ENCODE measurements at regions of chr9 and their contacts with region 1.

Region 1: DNA sequence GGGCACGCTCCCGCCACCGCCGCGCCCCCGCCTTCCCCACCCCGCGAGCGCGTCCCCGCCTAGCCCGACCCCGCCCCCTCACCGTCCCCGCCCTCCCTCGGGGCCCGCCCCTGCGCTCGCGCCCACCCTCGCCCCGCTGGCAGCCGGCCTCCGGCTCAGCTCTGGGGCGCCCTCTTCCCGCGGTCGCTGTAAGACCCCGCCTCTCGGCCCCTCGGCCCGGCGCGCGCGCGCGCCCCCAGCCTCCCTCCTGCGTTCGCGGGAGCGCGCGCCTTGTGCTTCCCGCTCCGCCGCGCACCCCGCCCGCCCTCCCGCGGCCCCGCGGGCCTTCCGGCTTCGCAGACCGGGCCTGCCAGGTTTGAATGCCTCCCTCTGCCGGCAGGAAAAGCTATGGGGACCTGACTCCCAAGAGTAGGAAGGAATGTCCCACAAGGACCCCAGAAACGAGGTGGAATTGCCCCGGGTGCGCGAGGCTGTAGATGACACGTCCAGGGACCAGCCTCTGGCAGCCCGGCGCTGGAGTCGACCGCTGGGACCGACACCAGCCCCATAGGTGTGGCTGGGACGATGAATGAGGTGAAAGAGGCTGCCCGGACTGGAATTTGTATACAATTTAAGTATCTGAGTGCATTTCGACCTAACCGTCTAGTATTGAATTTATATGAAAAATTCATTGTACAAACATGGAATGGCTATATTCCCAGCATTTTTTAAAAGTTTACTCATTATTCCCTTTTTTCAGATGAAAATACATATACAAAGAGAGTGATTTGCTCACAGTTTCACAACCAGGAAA is 416 bp upstream of the PTBP3 start:
- DNase-seq: peak; percentile 87
- H3K4me3 Mint-ChIP-seq: peak overlapping the region; percentile 84
- H3K27ac Mint-ChIP-seq: peak overlapping the region; percentile 94
- H3K4me1 Mint-ChIP-seq: peaks cover 33% of the 10 kb centered on the region
- H3K27me3 Mint-ChIP-seq: no peaks in the 10 kb centered on the region

Region 2: GRCh38 chr9:111896353-111896958 is 437.4 kb before region 1 on chr9 and contains the start of gene UGCG:
- intact Hi-C with region 1: loop called (anchors 1 kb)
- DNase-seq: peak; percentile 85
- H3K4me3 Mint-ChIP-seq: peak within 1 kb of the TSS; percentile 84
- H3K27ac Mint-ChIP-seq: peak within 1 kb of the TSS; percentile 83
- H3K4me1 Mint-ChIP-seq: peaks cover 9% of the 10 kb centered on the region
- H3K27me3 Mint-ChIP-seq: peaks cover 3% of the 10 kb centered on the region
- total RNA-seq, gene UGCG: 14.4 and 16.6 TPM in 2 replicates

Region 3: DNA sequence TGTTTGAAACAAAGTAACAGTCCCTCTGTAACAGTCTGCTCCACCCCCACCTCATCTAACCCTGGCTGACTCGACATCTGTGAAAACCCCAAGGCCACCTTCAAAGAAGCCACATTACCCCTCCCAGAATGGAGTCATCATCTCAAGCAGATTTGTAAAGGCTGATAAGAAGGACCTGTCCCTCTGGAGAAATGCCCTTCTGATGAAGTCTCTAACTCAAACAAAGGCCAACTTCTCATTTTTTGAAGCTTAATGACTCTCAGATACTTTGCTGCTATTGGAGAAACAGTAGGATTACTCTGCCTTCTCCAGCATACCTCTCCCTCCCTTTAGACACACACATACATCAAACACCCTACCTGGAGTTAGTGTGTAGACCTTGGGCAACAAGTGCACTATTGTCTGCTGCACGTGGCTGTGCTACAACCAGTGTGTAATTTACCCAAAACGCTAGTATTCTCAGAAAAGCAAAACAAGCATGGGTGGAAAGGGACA is 153.4 kb before region 1 on chr9:
- intact Hi-C with region 1: loop called (anchors 2 kb)
- DNase-seq: peak; percentile 55
- H3K4me3 Mint-ChIP-seq: peak overlapping the region; percentile 11
- H3K27ac Mint-ChIP-seq: peak overlapping the region; percentile 61
- H3K4me1 Mint-ChIP-seq: peaks cover 50% of the 10 kb centered on the region
- H3K27me3 Mint-ChIP-seq: peaks cover 2% of the 10 kb centered on the region

Region 4: DNA sequence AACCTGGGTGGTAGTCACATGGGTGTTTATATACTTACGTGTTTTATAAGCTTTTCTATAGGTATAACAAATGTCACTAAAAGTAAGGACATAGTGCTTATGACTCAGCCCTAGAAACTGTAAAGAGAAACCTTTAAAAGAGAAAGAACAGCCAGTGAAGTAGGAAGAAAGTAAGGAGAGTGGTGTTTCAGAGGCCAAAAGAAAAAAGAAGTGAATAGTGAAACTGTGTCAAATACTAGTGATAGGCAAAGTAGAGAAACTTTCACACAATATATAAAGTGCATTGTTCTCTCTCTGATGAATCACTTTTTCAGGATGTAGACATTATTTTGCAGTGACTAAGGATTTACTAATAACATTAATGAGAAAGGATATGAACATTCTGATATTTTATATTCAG is 84.6 kb before region 1 on chr9:
- intact Hi-C with region 1: loop called (anchors 2 kb)
- DNase-seq: no peak
- H3K4me3 Mint-ChIP-seq: no peak overlapping the region
- H3K27ac Mint-ChIP-seq: peak overlapping the region; percentile 34
- H3K4me1 Mint-ChIP-seq: peaks cover 26% of the 10 kb centered on the region
- H3K27me3 Mint-ChIP-seq: no peaks in the 10 kb centered on the region

Region 5: DNA sequence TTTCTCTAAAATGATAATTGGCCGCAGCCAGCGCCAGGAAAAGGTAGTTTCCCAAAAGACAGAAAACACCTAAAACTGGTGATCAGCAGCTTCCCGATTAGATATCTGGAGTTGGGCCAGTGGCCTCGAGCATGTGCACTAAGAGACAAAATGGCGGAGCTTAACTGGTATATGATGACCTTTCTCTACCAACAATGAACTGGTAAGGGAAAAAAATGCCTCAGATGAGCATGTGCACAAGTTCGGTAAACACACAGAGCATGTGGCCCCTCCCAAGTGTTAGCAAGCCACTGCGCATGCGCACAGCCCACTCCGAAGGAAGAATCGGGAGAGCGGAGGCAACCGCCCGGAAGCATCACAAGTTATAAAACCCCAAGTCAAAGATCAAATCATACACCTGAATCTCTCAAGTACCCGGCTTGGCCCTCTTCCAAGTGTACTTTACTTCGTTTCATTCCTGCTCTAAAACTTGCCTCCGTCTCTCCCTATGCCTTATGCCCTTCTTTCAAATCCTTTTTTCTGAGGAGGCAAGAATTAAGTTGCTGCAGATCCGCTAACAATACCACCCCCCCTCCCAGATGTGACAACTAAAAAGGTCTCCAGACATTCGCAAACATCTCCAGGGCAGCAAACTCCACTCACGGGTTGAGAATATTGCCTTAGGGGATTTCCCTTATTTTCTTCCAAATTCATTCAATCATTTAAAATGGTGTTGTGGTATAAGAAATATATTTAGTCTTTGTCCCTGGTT is 14.6 kb after region 1 on chr9:
- intact Hi-C with region 1: loop called (anchors 2 kb)
- DNase-seq: peak; percentile 70
- H3K4me3 Mint-ChIP-seq: peak overlapping the region; percentile 69
- H3K27ac Mint-ChIP-seq: peak overlapping the region; percentile 83
- H3K4me1 Mint-ChIP-seq: peaks cover 14% of the 10 kb centered on the region
- H3K27me3 Mint-ChIP-seq: peaks cover 2% of the 10 kb centered on the region

Region 6: GRCh38 chr9:112361601-112362000 is 27.8 kb after region 1 on chr9:
- intact Hi-C with region 1: loop called (anchors 1 kb)
- DNase-seq: no peak
- H3K4me3 Mint-ChIP-seq: no peak overlapping the region
- H3K27ac Mint-ChIP-seq: no peak overlapping the region
- H3K4me1 Mint-ChIP-seq: peaks cover 10% of the 10 kb centered on the region
- H3K27me3 Mint-ChIP-seq: peaks cover 8% of the 10 kb centered on the region

Measured in activated T-helper 2 cell treated with anti-CD3 and anti-CD28 coated beads, Interferon-gamma antibody, Interleukin-2, Interleukin-4, amounts not matched to agents 10 μg/mL and 5 μg/mL and 100 μg/mL, durations not matched to agents 14 hours and 24 hours and 36 hours (primary cell).